ENCODE measurements at regions of chr16 and their contacts with region 1.

Region 1: DNA sequence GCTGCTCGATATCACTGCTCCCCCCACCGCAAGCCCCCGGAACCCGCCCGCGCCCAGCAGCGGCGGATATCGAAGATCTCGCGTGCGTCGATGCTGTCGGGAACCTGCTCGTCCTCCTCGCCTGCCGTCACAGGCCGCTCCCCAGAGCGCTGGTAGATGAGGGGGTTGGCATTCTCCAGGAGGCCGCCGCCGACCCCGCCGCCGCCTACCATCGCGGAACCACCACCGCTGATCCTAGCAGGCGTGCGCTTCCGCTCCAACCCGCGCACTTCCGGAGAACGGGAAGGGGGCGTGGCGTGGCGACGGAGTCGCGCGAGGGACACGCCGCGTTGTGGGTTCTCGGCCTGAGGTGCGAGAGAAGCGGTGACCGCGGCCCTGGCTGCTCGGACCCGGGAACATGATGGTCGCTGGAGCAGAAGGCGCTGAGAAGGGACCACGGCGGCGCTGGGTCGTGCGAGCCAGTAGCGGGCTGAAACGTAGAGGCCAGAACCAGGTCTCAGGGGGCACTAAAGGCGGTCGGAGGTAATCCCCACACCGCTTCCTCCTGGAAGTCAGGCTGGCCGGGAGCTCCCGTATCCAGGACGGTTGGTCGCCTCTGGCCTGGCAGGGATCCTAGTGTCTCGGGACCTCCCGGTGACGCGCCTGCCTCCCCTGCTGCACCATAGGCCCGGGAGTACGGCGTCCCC is at the start of gene CIAO2B:
- DNase-seq: peak; percentile 93
- ATAC-seq: peak; percentile 84
- H3K4me3 Mint-ChIP-seq: peak within 1 kb of the TSS; percentile 99
- H3K27ac Mint-ChIP-seq: peak within 1 kb of the TSS; percentile 96
- H3K4me1 Mint-ChIP-seq: peaks cover 57% of the 10 kb centered on the region
- H3K27me3 Mint-ChIP-seq: no peaks in the 10 kb centered on the region
- total RNA-seq, gene CIAO2B: 171 to 186 TPM

Region 2: GRCh38 chr16:66880288-66881013 is 53.8 kb before region 1 on chr16 and contains the start of gene PDP2:
- CTCF ChIA-PET with region 1: no interaction called
- POLR2A ChIA-PET with region 1: no interaction called
- intact Hi-C with region 1: loop called (anchors 1 to 2 kb)
- DNase-seq: peak; percentile 95
- ATAC-seq: peak; percentile 90
- H3K4me3 Mint-ChIP-seq: peak within 1 kb of the TSS; percentile 90
- H3K27ac Mint-ChIP-seq: peak within 1 kb of the TSS; percentile 96
- H3K4me1 Mint-ChIP-seq: peaks cover 48% of the 10 kb centered on the region
- H3K27me3 Mint-ChIP-seq: no peaks in the 10 kb centered on the region
- total RNA-seq, gene PDP2: 27.8 to 36.6 TPM

Region 3: DNA sequence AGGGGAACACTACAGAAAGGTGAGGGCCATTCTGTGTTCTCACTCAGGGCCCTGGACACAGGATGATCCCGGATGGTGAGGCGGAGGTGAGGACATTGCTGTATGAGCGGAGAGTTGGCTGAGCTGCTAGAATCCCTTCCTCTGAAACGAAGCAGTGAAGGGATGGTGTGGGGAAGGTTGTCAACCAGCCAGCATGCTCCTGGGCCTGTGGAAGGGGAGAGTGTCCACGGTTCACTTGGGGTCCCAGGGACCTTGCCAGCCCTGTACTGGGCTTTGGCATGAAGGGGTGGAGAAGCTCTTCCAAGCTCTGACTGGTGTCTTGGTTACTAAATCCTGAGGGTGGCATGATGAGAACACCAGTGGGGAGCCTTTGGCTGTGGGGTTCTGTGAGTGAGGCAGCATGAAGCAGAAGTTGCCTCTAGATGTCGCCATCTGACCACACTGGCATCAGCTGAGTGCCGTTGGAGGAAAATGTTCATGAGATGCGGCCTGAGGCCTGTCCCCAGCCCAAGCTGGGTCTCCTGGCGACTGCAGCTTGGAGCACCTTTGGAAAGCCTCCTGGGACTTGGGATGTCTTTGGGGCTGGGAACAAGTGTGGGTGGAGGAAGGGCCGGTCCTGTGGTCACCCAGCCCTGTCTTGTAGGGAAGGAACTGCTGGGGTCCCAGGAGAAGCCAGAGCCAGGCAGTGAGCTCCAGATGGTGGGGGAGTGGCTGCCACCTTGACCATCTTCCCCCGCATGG is 39.2 kb before region 1 on chr16:
- CTCF ChIA-PET with region 1: interaction called, 19 read pairs
- POLR2A ChIA-PET with region 1: no interaction called
- intact Hi-C with region 1: loop called (anchors 2 kb)
- DNase-seq: peak; percentile 81
- ATAC-seq: peak; percentile 89
- H3K4me3 Mint-ChIP-seq: no peak overlapping the region
- H3K27ac Mint-ChIP-seq: no peak overlapping the region
- H3K4me1 Mint-ChIP-seq: peaks cover 8% of the 10 kb centered on the region
- H3K27me3 Mint-ChIP-seq: no peaks in the 10 kb centered on the region

Region 4: DNA sequence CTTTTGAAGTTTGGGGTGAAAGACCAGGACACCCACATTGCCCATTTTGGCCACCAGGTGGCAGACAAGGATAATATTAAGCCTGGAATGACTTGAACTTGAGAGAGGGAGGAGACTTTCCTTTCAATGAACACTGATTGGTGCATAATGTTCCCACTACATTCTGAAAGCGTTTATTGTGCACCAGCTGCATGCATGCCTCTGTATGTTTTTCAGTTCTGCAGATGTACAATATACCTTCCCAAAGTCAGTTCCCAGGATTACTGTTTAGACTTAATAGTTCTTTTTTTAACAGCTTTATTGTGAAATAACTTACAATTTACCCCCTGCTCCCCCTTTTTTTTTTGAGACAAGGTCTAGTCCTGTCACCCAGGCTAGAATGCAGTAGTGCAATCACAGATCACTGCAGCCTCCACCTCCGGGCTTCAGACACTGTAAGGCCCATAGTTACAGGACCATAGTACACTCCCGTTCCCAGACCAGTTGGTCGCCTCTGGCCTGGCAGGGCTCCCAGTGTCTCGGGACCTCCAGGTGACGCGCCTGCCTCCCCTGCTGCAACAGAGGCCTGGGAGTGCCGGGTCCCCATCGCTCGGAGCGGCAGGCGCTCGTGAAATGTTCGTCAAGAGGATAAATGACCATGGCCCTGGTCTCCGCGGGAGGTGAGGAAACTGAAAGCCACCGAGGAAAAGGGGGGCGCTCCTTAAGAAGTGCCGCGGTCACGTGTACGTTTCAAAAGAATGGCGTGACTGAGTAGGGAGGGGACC is 13.2 kb after region 1 on chr16:
- CTCF ChIA-PET with region 1: interaction called, 5 read pairs
- POLR2A ChIA-PET with region 1: no interaction called
- intact Hi-C with region 1: loop called in 1 of 2 experiments (anchors 1 kb)
- DNase-seq: peak; percentile 92
- ATAC-seq: peak; percentile 92
- H3K4me3 Mint-ChIP-seq: peak overlapping the region; percentile 67
- H3K27ac Mint-ChIP-seq: no peak overlapping the region
- H3K4me1 Mint-ChIP-seq: peaks cover 22% of the 10 kb centered on the region
- H3K27me3 Mint-ChIP-seq: peaks cover 29% of the 10 kb centered on the region